WTC11 (cell line): ENCODE measurements at regions of chr12 and their contacts with region 1.

Region 1: DNA sequence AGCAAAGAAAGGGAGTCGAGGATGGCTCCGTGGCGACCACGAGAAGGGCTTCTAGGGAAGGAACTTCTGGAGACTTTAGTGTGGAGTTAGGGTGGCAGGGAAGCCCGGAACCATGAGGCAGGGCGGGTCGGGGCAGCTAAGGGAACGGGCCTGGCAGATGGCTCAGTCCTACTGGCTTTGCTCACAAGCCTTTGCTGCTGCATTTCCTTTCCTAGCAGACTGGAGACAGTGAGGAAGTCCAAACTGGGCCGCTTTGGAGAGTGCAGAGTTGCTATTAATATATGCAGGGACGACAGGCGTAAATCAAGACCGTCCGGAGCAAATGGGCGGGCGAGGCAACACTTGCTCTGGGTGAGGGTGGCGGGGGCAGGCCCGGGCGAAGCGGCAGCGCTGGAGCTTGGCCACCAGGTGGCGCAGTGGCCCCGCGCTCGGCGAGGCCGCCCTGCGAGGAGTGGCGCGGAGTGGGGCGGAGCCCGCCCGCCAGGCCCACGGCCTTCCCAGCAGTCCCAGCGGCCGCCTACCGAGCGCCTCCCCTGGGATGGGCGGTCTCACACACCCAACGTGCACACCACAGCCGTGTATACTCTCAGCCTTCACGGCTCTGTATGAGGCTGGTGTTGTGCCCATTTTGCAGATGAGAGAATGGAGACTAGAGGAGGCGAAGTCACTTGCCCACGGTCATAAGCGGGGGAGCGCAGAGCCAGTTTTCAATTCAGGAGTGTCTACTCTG is 24.4 kb upstream of the LRTM2 start:
- DNase-seq: peak; percentile 86
- ATAC-seq: peak; percentile 72
- H3K4me3 Mint-ChIP-seq: peak overlapping the region; percentile 66
- H3K27ac Mint-ChIP-seq: no peak overlapping the region
- H3K4me1 Mint-ChIP-seq: peaks cover 35% of the 10 kb centered on the region
- H3K27me3 Mint-ChIP-seq: no peaks in the 10 kb centered on the region; the same call in 1 of the 2 replicates
- CTCF ChIP-seq: peak; percentile 96

Region 2: DNA sequence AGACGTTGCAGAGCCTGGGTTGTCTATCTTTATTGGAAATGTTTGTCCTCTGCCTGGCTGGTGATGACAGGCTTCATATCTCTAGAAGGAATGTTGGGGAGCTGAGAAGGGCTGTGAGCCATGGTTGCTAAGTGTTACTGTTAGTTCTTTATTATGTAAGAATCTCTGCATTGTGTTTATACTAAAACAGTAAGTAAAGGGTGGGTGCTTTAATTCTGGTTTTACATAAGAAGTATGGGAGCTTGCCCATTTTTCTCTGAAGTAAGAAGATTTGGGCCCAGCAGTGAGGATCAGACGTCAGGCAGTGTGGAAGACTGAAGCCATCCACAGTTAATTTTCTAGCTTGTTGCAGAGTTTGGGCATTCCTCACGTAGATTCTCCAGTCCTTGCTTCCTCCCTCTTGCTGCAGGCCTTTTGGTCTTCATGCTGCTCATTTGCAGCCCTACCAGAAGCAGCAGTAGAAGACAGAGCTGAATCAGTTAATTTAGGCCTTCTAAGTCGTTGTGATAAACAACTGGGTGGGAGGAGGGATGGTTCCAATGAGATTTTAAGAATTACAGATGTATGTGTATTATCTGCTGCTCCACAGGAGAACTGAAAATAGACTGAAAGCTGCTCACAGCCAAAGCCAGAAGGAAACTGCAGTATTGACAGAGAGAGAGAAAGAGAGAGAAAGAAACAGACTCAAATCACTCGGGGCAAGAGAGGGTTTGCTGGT is 145.5 kb before region 1 on chr12:
- CTCF ChIA-PET with region 1: interaction called, 154 read pairs
- POLR2A ChIA-PET with region 1: interaction called, 3 read pairs
- DNase-seq: no peak
- ATAC-seq: no peak
- H3K4me3 Mint-ChIP-seq: no peak overlapping the region
- H3K27ac Mint-ChIP-seq: no peak overlapping the region
- H3K4me1 Mint-ChIP-seq: peaks cover 12% of the 10 kb centered on the region
- H3K27me3 Mint-ChIP-seq: no peaks in the 10 kb centered on the region
- CTCF ChIP-seq: no peak

Region 3: DNA sequence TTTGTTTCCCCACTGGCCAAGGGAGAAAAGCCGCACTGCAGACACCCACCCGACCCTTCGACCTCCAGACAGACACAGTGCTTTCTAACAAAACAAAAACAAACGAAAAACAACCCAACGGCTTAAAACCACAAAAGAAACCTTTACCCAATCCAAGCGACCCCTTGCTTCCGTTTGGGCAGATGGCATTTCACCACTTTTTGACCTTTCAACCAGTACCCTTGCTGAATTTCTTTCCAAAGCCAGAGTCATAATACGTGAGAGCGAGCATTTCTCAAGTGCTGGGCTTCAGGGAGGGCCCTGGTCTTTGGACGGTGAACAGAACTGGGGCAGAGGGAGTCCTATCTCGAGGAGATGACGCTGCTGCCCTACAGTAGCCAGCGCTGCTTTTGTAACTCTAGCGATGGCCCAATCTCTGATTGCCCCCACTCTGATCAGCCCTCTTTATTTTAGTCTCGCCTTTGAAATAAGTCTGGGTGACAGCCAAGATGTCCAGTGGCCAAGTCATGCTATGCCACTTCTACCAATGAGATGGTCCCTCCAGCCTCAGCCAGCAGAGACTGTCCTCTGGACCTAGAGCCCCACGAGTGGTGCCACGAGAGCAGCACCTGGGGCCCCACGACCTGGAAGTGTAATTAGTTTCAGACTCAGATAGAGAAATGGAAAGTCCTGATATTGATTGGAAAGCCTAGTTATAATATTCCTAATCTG is 127.0 kb before region 1 on chr12:
- CTCF ChIA-PET with region 1: interaction called, 18 read pairs
- POLR2A ChIA-PET with region 1: no interaction called
- DNase-seq: no peak
- ATAC-seq: no peak
- H3K4me3 Mint-ChIP-seq: no peak overlapping the region
- H3K27ac Mint-ChIP-seq: no peak overlapping the region; the same call in 1 of the 2 replicates
- H3K4me1 Mint-ChIP-seq: peaks cover 8% of the 10 kb centered on the region
- H3K27me3 Mint-ChIP-seq: peaks cover 12% of the 10 kb centered on the region
- CTCF ChIP-seq: no peak

Region 4: GRCh38 chr12:1698638-1699214 is 97.2 kb before region 1 on chr12:
- CTCF ChIA-PET with region 1: interaction called, 27 read pairs
- POLR2A ChIA-PET with region 1: no interaction called
- DNase-seq: no peak
- ATAC-seq: no peak
- H3K4me3 Mint-ChIP-seq: no peak overlapping the region
- H3K27ac Mint-ChIP-seq: no peak overlapping the region
- H3K4me1 Mint-ChIP-seq: peaks cover 18% of the 10 kb centered on the region
- H3K27me3 Mint-ChIP-seq: no peaks in the 10 kb centered on the region
- CTCF ChIP-seq: no peak

Region 5: DNA sequence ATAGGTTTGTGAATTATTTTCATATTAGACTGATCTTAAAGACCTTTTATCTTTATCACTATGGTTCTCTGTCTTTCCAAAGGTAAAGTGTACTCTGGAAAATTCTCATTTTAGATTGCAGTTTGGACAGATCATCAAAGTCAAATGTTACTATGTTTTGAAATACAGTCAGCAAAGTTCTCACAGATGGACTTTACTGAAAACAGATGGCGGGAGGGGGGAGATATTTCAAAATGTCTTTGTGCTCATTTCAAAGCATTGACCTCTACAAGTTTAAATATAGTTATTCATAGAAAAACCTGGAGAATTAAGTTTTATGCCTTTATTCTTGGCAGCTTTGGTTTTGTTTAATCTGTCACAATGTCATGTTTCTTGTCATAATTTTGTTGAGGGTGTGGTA is 27.3 kb before region 1 on chr12:
- CTCF ChIA-PET with region 1: interaction called, 12 read pairs
- POLR2A ChIA-PET with region 1: no interaction called
- DNase-seq: no peak
- ATAC-seq: no peak
- H3K4me3 Mint-ChIP-seq: no peak overlapping the region
- H3K27ac Mint-ChIP-seq: no peak overlapping the region
- H3K4me1 Mint-ChIP-seq: peaks cover 14% of the 10 kb centered on the region
- H3K27me3 Mint-ChIP-seq: no peaks in the 10 kb centered on the region
- CTCF ChIP-seq: no peak

Region 6: GRCh38 chr12:1781772-1782171 is 14.2 kb before region 1 on chr12:
- CTCF ChIA-PET with region 1: interaction called, 13 read pairs
- POLR2A ChIA-PET with region 1: no interaction called
- DNase-seq: no peak
- ATAC-seq: no peak; the same call in 1 of the 2 replicates
- H3K4me3 Mint-ChIP-seq: no peak overlapping the region
- H3K27ac Mint-ChIP-seq: no peak overlapping the region
- H3K4me1 Mint-ChIP-seq: 0 out of 2 replicates have a peak, but pooled peaks cover 2% of the 10 kb centered on the region
- H3K27me3 Mint-ChIP-seq: no peaks in the 10 kb centered on the region
- CTCF ChIP-seq: no peak